ENCODE measurements at regions of chr19 and their contacts with region 1.

Region 1: DNA sequence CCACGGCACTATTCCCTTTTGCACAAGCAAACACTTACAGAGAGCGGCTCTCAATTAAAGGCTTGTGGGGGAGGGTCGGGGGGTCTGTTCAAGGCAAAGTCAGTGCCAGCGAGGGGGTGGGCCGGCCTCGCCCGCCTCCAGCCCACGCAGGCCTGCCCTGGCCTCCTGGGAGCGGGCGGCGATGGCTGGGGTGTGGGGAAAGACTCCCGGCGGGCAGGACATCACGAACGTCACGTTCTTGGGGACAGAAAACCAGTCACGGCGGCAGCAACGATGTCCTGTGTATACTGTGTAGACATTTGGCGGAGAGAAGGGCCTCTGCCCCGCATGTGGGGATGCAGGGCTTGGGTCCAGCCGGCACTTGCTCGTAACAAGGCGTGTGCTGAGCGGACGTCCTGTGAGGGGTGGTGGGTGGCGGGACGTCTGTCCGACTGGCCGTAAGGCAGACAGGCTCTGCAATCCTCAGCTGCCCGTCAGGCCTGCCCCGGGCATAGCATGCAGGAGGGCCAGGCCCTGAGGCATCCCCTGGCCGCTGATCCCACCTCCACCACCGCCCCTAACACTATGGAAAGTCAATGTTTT is 5.6 kb upstream of the EPHX3 start:
- H3K4me3 ChIP-seq: no peak overlapping the region
- H3K27ac ChIP-seq: no peak overlapping the region
- H3K4me1 ChIP-seq: no peaks in the 10 kb centered on the region
- CTCF ChIP-seq: no peak

Region 2: DNA sequence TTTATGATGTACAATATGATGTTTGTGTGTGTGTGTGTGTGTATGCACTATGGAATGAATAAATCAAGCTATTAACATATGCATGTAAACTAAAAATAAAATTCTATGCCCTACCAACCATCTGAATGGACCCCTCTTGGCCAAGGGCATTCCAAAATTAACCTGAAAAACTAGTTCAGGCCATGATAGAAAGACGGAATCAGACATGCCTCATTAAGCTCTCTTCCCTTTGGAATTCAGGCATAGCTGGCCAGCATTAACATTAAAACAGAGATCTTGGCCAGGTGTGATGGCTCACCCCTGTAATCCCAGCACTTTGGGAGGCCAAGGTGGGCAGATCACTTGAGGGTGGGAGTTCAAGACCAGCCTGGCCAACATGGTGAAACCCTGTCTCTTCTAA is 239.9 kb before region 1 on chr19:
- CTCF ChIA-PET with region 1: no interaction called
- POLR2A ChIA-PET with region 1: no interaction called
- H3K4me3 ChIP-seq: no peak overlapping the region
- H3K27ac ChIP-seq: no peak overlapping the region
- H3K4me1 ChIP-seq: no peaks in the 10 kb centered on the region
- CTCF ChIP-seq: no peak

Region 3: DNA sequence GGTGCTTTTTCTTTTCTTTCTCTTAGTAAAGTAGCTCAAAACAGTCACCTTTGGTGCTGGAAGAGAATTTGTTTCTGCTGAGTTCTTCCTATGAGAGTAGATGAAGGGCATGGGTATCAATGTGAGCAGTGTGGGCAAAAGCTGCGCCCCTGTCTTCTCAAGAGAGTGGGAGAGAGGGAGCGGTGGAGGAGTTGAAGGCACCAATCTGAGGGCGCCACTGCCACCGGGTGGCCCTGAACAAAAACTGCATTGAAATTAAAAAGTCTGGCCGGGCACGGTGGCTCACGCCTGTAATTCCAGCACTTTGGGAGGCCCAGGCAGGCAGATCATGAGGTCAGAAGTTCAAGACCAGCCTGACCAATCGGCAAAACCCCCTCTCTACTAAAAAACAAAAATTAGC is 23.1 kb after region 1 on chr19:
- CTCF ChIA-PET with region 1: no interaction called
- POLR2A ChIA-PET with region 1: interaction called, 13 read pairs
- H3K4me3 ChIP-seq: no peak overlapping the region
- H3K27ac ChIP-seq: no peak overlapping the region
- H3K4me1 ChIP-seq: no peaks in the 10 kb centered on the region
- CTCF ChIP-seq: peak; percentile 33; the same call in 1 of the 2 replicates

Measured in HEK293 (cell line).